Activated CD8-positive, alpha-beta T cell treated with anti-CD3 and anti-CD28 coated beads, Interleukin-2, amount 10 ng/mL, durations not matched to agents 7 days and 5 days (primary cell): ENCODE measurements at regions of chr1 and their contacts with region 1.

Region 1: GRCh38 chr1:109532365-109533136 is 7.1 kb upstream of the GPR61 start:
- DNase-seq: peak; percentile 94
- ATAC-seq: peak; percentile 88
- H3K4me3 Mint-ChIP-seq: peak overlapping the region; percentile 53
- H3K27ac Mint-ChIP-seq: peak overlapping the region; percentile 96
- H3K4me1 Mint-ChIP-seq: peaks cover 36% of the 10 kb centered on the region
- H3K27me3 Mint-ChIP-seq: no peaks in the 10 kb centered on the region

Region 2: GRCh38 chr1:109263597-109264398 is 268.8 kb before region 1 on chr1:
- CTCF ChIA-PET with region 1: interaction called, 11 read pairs
- POLR2A ChIA-PET with region 1: no interaction called
- DNase-seq: peak; percentile 86
- ATAC-seq: peak; percentile 93
- H3K4me3 Mint-ChIP-seq: no peak overlapping the region
- H3K27ac Mint-ChIP-seq: peak overlapping the region; percentile 39
- H3K4me1 Mint-ChIP-seq: peaks cover 4% of the 10 kb centered on the region
- H3K27me3 Mint-ChIP-seq: no peaks in the 10 kb centered on the region

Region 3: GRCh38 chr1:109282952-109283747 is 249.4 kb before region 1 on chr1 and contains the start of gene PSRC1:
- CTCF ChIA-PET with region 1: interaction called, 41 read pairs
- POLR2A ChIA-PET with region 1: no interaction called
- DNase-seq: peak; percentile 93
- ATAC-seq: peak; percentile 97
- H3K4me3 Mint-ChIP-seq: peak within 1 kb of the TSS; percentile 99
- H3K27ac Mint-ChIP-seq: peak within 1 kb of the TSS; percentile 91
- H3K4me1 Mint-ChIP-seq: peaks cover 31% of the 10 kb centered on the region
- H3K27me3 Mint-ChIP-seq: peaks cover 7% of the 10 kb centered on the region
- total RNA-seq, gene PSRC1: 38.2 to 40.7 TPM

Region 4: GRCh38 chr1:109412551-109412950 is 120.0 kb before region 1 on chr1:
- CTCF ChIA-PET with region 1: interaction called, 15 read pairs
- POLR2A ChIA-PET with region 1: no interaction called
- DNase-seq: no peak
- ATAC-seq: no peak
- H3K4me3 Mint-ChIP-seq: no peak overlapping the region
- H3K27ac Mint-ChIP-seq: no peak overlapping the region
- H3K4me1 Mint-ChIP-seq: peaks cover 2% of the 10 kb centered on the region
- H3K27me3 Mint-ChIP-seq: no peaks in the 10 kb centered on the region

Region 5: DNA sequence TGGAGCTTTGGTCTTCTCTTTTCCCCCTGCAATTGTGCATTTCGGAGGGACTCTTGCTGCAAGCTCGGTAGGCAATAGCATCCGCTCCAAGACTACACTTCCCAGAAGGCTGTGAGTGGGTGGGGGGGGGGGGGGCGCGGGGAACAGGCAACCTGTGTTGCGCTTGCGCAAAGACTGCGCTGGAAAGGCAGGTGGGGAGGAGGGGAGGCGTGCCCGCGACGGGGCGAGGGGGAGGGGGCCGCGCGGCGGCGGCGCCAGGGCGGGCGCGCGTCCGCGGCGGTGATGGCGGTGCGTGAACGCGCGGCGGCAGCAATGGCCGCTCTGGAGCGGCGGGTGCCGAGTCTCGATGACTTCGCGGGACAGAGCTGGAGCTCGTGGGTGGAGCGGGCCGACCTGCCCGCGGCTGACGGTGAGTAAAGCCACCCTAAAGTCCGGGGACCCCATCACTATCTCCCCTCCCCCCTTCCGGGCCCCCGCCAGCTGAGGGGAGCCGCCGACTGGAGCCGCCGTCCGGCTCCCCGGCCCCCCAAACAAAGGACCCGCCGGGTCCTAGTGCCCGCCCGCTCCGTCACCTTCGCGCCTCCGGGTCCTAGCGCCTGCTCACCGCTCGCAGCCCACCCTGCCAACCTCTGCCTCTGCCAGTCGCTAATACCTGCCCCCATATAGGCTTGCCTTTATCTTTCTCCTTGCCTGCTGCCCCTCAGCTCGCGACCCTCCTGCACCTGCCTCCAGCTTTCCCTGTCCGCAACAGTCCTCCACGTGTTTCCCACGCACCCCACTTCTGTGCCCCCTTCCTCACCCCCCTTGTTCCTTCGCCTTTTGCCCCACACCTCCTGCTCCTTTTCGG is 48.7 kb before region 1 on chr1 and contains the start of gene ATXN7L2:
- CTCF ChIA-PET with region 1: interaction called, 1,507 read pairs
- POLR2A ChIA-PET with region 1: interaction called, 3 read pairs
- DNase-seq: peak; percentile 94
- ATAC-seq: peak; percentile 75
- H3K4me3 Mint-ChIP-seq: peak within 1 kb of the TSS; percentile 91
- H3K27ac Mint-ChIP-seq: peak within 1 kb of the TSS; percentile 90
- H3K4me1 Mint-ChIP-seq: peaks cover 45% of the 10 kb centered on the region
- H3K27me3 Mint-ChIP-seq: peaks cover 10% of the 10 kb centered on the region
- total RNA-seq, gene ATXN7L2: 10.2 to 11.6 TPM

Region 6: DNA sequence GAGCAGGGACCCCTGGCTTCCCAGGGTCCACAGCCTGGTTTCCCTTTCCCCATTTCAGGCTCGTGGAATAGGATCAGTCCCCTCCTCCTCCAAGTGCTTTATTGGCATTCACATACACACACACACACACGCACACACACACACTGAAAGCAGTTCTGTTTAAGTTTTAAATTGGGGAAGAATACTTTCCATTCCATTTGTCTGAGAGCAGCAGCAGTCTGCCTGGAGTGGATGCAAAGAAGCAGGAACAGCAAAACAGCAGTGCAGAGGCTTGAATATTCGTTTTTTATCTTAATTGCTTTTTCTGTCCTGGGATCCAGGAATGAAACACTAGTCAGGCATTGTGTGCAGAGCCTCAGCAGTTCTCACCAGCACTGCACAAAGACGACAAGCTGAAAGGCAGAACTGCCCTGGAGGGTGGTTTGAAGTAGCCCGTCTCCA is 31.6 kb before region 1 on chr1:
- CTCF ChIA-PET with region 1: interaction called, 1,507 read pairs
- POLR2A ChIA-PET with region 1: interaction called, 66 read pairs
- DNase-seq: no peak
- ATAC-seq: no peak
- H3K4me3 Mint-ChIP-seq: peak overlapping the region; percentile 74
- H3K27ac Mint-ChIP-seq: peak overlapping the region; percentile 88
- H3K4me1 Mint-ChIP-seq: peaks cover 87% of the 10 kb centered on the region
- H3K27me3 Mint-ChIP-seq: no peaks in the 10 kb centered on the region

Region 7: GRCh38 chr1:109613361-109614147 is 81.0 kb after region 1 on chr1:
- CTCF ChIA-PET with region 1: interaction called, 12 read pairs
- POLR2A ChIA-PET with region 1: no interaction called
- DNase-seq: no peak
- ATAC-seq: no peak
- H3K4me3 Mint-ChIP-seq: no peak overlapping the region
- H3K27ac Mint-ChIP-seq: no peak overlapping the region
- H3K4me1 Mint-ChIP-seq: peaks cover 26% of the 10 kb centered on the region
- H3K27me3 Mint-ChIP-seq: peaks cover 3% of the 10 kb centered on the region

Region 8: GRCh38 chr1:109931189-109931731 is 398.7 kb after region 1 on chr1:
- CTCF ChIA-PET with region 1: no interaction called
- POLR2A ChIA-PET with region 1: no interaction called
- DNase-seq: no peak
- ATAC-seq: no peak
- H3K4me3 Mint-ChIP-seq: no peak overlapping the region
- H3K27ac Mint-ChIP-seq: no peak overlapping the region
- H3K4me1 Mint-ChIP-seq: peaks cover 25% of the 10 kb centered on the region
- H3K27me3 Mint-ChIP-seq: peaks cover 5% of the 10 kb centered on the region